Activated CD4-positive, alpha-beta T cell treated with anti-CD3 and anti-CD28 coated beads for 36 hours (primary cell): ENCODE measurements at regions of chr11 and their contacts with region 1.

Region 1: GRCh38 chr11:17354601-17354991 is 3.0 kb downstream of the NCR3LG1 start:
- DNase-seq: peak; percentile 76
- ATAC-seq: no peak
- H3K4me3 Mint-ChIP-seq: peak overlapping the region; percentile 77
- H3K27ac Mint-ChIP-seq: no peak overlapping the region
- H3K4me1 Mint-ChIP-seq: peaks cover 35% of the 10 kb centered on the region
- H3K27me3 Mint-ChIP-seq: peaks cover 9% of the 10 kb centered on the region

Region 2: DNA sequence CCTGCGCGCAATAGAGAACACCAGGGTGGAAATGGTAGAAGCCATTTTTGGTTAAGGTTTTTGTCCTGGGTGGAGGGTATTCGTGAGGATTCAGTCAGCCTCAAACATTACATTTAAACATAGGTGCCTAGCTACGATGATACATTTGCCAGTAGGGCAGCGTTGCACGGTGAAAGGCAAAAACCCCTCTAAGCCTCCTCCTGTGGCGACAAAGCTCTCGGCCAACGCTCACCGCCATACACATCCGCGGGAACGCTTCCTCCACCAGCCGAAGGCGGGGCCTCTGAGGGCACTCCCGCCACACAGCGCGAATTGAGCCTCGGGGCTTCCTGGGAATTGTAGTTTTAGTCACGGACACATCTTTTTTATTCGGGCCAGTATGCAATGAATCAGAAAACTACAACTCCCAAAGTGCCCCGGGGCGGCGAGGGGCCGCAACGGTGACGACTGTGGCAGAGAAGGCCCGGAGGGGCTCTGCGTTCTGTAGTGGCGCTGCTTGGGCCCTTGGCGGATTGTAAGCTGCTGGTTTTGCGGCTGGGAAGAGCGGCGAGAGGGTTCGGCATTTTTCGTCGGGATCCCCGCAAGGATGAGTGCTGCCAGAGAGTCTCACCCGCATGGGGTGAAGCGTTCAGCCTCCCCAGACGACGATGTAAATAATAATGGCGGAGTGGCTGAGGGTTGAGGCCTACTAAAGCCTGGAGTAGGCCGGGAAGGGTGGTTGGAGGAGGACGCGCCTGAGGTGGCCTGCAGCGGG is 616.2 kb before region 1 on chr11 and contains the start of gene C11orf58:
- CTCF ChIA-PET with region 1: no interaction called
- POLR2A ChIA-PET with region 1: no interaction called
- intact Hi-C with region 1: loop called in 1 of 2 experiments (anchors 5 kb)
- DNase-seq: peak; percentile 96
- ATAC-seq: peak; percentile 97
- H3K4me3 Mint-ChIP-seq: no peak within 1 kb of the TSS
- H3K27ac Mint-ChIP-seq: peak within 1 kb of the TSS; percentile 92
- H3K4me1 Mint-ChIP-seq: peaks cover 23% of the 10 kb centered on the region
- H3K27me3 Mint-ChIP-seq: no peaks in the 10 kb centered on the region
- total RNA-seq, gene C11orf58: 142 to 193 TPM

Region 3: DNA sequence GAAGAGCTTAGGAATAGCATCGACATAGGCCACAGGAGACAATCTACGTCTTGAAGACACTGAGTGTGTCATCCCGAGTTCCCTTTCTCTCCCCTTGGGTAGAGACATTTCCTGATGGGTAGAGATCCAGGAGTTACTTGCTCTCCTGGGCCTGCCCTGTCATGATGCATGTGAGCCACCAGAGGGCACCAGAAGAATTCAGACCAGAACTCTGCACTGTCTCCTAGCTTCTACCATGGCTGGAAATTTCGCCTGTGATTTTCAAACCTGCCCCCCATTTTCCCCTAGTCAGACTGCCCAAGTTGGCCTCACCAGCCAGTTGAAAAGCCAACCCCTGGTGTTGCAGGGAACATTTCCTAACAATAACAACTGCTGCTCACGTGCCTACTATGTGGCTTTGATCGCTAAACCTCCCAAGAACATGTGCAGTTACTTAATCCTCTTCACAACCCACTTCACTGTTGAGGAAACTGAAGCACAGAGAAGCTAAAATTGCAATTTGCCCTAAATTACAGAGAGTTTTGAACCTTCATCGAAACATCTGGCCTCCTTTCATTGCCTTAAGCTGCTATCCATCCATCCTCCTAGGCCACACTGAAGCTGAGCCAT is 569.0 kb before region 1 on chr11:
- CTCF ChIA-PET with region 1: no interaction called
- POLR2A ChIA-PET with region 1: no interaction called
- intact Hi-C with region 1: no loop called
- DNase-seq: peak; percentile 77
- ATAC-seq: peak; percentile 80
- H3K4me3 Mint-ChIP-seq: no peak overlapping the region
- H3K27ac Mint-ChIP-seq: no peak overlapping the region
- H3K4me1 Mint-ChIP-seq: no peaks in the 10 kb centered on the region
- H3K27me3 Mint-ChIP-seq: no peaks in the 10 kb centered on the region

Region 4: DNA sequence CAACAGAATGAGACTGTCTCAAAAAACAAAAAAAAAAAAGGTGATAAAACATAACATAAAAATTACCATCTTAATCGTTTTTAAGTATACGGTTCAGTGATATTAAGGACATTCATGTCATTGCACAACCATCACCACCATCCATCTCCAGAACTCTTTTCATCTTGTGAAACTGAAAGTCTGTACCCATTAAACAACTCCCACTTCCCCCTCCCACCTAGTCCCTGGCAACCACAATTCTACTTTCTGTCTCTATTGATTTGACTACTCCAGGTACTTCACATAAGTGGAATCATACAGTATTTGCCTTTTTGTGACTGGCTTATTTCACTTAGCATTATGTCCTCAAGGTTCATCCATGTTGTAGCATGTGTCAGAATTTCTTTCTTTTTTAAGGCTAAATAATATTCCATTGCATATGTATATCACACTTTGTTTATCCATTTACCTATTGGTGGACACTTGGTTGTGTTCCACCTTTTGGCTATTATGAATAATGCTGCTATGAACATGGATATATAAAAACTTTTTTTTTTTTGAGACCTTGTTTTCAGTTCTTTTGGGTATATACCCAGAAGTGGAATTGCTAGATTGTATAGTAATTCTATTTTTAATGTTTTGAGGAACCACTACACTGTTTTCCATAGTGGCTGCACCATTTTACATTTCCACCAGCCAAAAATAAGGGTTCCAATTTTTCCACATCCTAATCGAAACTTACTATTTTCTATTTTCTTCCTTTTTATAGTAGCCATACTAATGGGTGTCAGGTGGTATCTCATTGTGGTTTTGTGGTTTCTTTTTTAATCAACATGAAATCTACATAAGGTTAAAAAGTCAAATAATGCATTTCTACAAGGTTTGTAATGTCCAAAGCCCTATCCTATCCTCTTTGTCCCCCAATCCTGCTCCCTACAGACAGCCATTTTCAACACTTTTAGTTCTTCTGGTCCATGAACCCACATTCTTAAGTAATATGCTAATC is 123.4 kb before region 1 on chr11:
- CTCF ChIA-PET with region 1: interaction called, 9 read pairs
- POLR2A ChIA-PET with region 1: no interaction called
- intact Hi-C with region 1: loop called (anchors 1 to 2 kb)
- DNase-seq: peak; percentile 67
- ATAC-seq: peak; percentile 94
- H3K4me3 Mint-ChIP-seq: no peak overlapping the region
- H3K27ac Mint-ChIP-seq: no peak overlapping the region
- H3K4me1 Mint-ChIP-seq: peaks cover 16% of the 10 kb centered on the region
- H3K27me3 Mint-ChIP-seq: peaks cover 8% of the 10 kb centered on the region

Region 5: DNA sequence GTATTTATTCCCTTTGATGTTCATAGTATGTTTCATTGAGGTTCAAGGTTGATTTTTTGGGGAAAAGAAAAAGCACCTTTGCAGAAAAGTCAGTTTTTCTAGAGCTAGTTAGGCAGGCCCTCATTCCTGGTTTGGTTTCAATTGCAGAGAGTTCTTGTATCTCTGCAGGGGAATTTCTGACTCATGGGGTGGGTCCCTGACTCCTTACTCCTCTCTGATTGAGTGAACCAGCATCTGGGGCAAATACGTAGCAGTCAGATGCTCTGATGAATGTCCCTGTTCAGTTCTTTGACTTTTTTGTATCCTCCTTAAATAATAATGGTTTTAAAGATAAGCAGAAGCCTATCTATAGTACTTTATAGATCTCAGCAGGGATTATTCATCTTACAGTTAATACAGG is 10.7 kb before region 1 on chr11:
- CTCF ChIA-PET with region 1: interaction called, 14 read pairs
- POLR2A ChIA-PET with region 1: no interaction called
- intact Hi-C with region 1: no loop called
- DNase-seq: peak; percentile 80
- ATAC-seq: peak; percentile 99
- H3K4me3 Mint-ChIP-seq: no peak overlapping the region
- H3K27ac Mint-ChIP-seq: no peak overlapping the region
- H3K4me1 Mint-ChIP-seq: peaks cover 15% of the 10 kb centered on the region
- H3K27me3 Mint-ChIP-seq: no peaks in the 10 kb centered on the region

Region 6: GRCh38 chr11:17389211-17389956 is 34.8 kb after region 1 on chr11:
- CTCF ChIA-PET with region 1: interaction called, 15 read pairs
- POLR2A ChIA-PET with region 1: no interaction called
- intact Hi-C with region 1: loop called (anchors 1 kb)
- DNase-seq: peak; percentile 86
- ATAC-seq: peak; percentile 82
- H3K4me3 Mint-ChIP-seq: peak overlapping the region; percentile 66
- H3K27ac Mint-ChIP-seq: no peak overlapping the region
- H3K4me1 Mint-ChIP-seq: peaks cover 3% of the 10 kb centered on the region
- H3K27me3 Mint-ChIP-seq: peaks cover 8% of the 10 kb centered on the region

Region 7: GRCh38 chr11:18383388-18384156 is 1029.0 kb after region 1 on chr11:
- CTCF ChIA-PET with region 1: no interaction called
- POLR2A ChIA-PET with region 1: no interaction called
- intact Hi-C with region 1: loop called in 1 of 2 experiments (anchors 5 kb)
- DNase-seq: peak; percentile 89
- ATAC-seq: peak; percentile 96
- H3K4me3 Mint-ChIP-seq: peak overlapping the region; percentile 59
- H3K27ac Mint-ChIP-seq: peak overlapping the region; percentile 98
- H3K4me1 Mint-ChIP-seq: peaks cover 42% of the 10 kb centered on the region
- H3K27me3 Mint-ChIP-seq: no peaks in the 10 kb centered on the region